ENCODE measurements at regions of chr4 and their contacts with region 1.

Region 1: DNA sequence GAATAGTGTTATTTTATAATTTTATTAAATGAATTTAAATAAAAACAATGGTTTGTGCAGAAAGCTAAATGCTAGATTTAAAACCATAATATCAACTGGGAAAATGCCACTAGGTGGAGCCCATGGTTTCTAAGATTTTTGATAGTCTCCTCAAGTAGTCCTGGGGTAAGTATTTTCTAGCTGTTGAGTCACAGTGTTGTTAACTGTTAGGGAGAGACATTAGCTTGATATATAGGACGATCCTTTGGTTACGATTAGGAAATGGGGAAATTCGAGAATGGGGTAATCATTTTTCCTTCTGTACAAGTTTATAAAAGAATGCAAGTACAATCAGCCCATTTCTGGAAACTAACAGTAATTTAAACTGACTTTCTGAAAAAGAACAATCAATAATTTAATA is 378.4 kb downstream of the ANKRD50 start:
- DNase-seq: peak; percentile 88
- H3K4me3 ChIP-seq: no peak overlapping the region
- H3K27ac ChIP-seq: peak overlapping the region; percentile 75
- H3K4me1 ChIP-seq: peaks cover 7% of the 10 kb centered on the region
- H3K27me3 ChIP-seq: no peaks in the 10 kb centered on the region
- CTCF ChIP-seq: peak; percentile 30 to 45
- POLR2A ChIP-seq: no peak

Region 2: GRCh38 chr4:124111922-124112321 is 222.2 kb before region 1 on chr4:
- CTCF ChIA-PET with region 1: no interaction called
- POLR2A ChIA-PET with region 1: no interaction called
- dilution Hi-C with region 1: no loop called
- intact Hi-C with region 1: no loop called
- DNase-seq: peak; percentile 84
- H3K4me3 ChIP-seq: no peak overlapping the region
- H3K27ac ChIP-seq: peak overlapping the region; percentile 5
- H3K4me1 ChIP-seq: peaks cover 9% of the 10 kb centered on the region
- H3K27me3 ChIP-seq: no peaks in the 10 kb centered on the region
- CTCF ChIP-seq: peak; percentile 42 to 49
- POLR2A ChIP-seq: no peak

Region 3: GRCh38 chr4:124262211-124263179 is 71.6 kb before region 1 on chr4:
- CTCF ChIA-PET with region 1: no interaction called
- POLR2A ChIA-PET with region 1: no interaction called
- dilution Hi-C with region 1: no loop called
- intact Hi-C with region 1: no loop called
- DNase-seq: peak; percentile 86
- H3K4me3 ChIP-seq: no peak overlapping the region
- H3K27ac ChIP-seq: no peak overlapping the region
- H3K4me1 ChIP-seq: no peaks in the 10 kb centered on the region
- H3K27me3 ChIP-seq: no peaks in the 10 kb centered on the region
- CTCF ChIP-seq: peak; percentile 70 to 87
- POLR2A ChIP-seq: no peak

Region 4: GRCh38 chr4:124304941-124305340 is 29.2 kb before region 1 on chr4:
- CTCF ChIA-PET with region 1: no interaction called
- POLR2A ChIA-PET with region 1: no interaction called
- dilution Hi-C with region 1: no loop called
- intact Hi-C with region 1: no loop called
- DNase-seq: peak; percentile 3
- H3K4me3 ChIP-seq: no peak overlapping the region
- H3K27ac ChIP-seq: no peak overlapping the region
- H3K4me1 ChIP-seq: no peaks in the 10 kb centered on the region
- H3K27me3 ChIP-seq: no peaks in the 10 kb centered on the region
- CTCF ChIP-seq: no peak
- POLR2A ChIP-seq: no peak

Region 5: GRCh38 chr4:124432500-124432899 is 98.4 kb after region 1 on chr4:
- CTCF ChIA-PET with region 1: interaction called, 39 read pairs
- POLR2A ChIA-PET with region 1: interaction called, 9 read pairs
- dilution Hi-C with region 1: no loop called
- intact Hi-C with region 1: loop called (anchors 1 kb)
- DNase-seq: peak; percentile 94
- H3K4me3 ChIP-seq: peak overlapping the region in 1 of 3 experiments; percentile 24
- H3K27ac ChIP-seq: peak overlapping the region; percentile 100
- H3K4me1 ChIP-seq: peaks cover 75% of the 10 kb centered on the region
- H3K27me3 ChIP-seq: no peaks in the 10 kb centered on the region
- CTCF ChIP-seq: no peak
- POLR2A ChIP-seq: no peak

Region 6: GRCh38 chr4:124631760-124632159 is 297.6 kb after region 1 on chr4:
- CTCF ChIA-PET with region 1: interaction called, 11 read pairs
- POLR2A ChIA-PET with region 1: no interaction called
- dilution Hi-C with region 1: no loop called
- intact Hi-C with region 1: no loop called
- DNase-seq: peak; percentile 98
- H3K4me3 ChIP-seq: no peak overlapping the region
- H3K27ac ChIP-seq: peak overlapping the region; percentile 70
- H3K4me1 ChIP-seq: peaks cover 29% of the 10 kb centered on the region
- H3K27me3 ChIP-seq: no peaks in the 10 kb centered on the region
- CTCF ChIP-seq: no peak
- POLR2A ChIP-seq: no peak

Region 7: DNA sequence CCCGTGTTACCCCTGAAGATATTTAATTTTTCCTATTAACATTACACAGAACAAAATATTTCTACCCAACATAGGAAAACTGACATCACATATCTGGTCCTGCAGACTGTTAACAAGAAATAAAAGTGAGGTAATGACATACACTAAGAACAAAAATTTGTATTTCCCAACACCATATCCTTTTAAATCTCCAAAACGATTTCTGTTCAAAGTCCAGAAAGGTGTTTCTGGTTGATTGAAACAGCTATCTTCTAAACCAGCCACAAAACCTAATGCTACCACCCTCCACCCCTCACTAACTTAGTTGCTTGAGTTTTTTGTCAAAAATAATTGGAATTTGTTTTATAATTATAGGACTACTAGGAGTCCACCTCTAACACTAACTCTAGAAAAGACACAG is 371.3 kb after region 1 on chr4:
- CTCF ChIA-PET with region 1: interaction called, 47 read pairs
- POLR2A ChIA-PET with region 1: interaction called, 5 read pairs
- dilution Hi-C with region 1: no loop called
- intact Hi-C with region 1: no loop called
- DNase-seq: no peak
- H3K4me3 ChIP-seq: peak overlapping the region in 1 of 3 experiments; percentile 97
- H3K27ac ChIP-seq: no peak overlapping the region
- H3K4me1 ChIP-seq: peaks cover 48% of the 10 kb centered on the region
- H3K27me3 ChIP-seq: no peaks in the 10 kb centered on the region
- CTCF ChIP-seq: no peak
- POLR2A ChIP-seq: no peak

Region 8: DNA sequence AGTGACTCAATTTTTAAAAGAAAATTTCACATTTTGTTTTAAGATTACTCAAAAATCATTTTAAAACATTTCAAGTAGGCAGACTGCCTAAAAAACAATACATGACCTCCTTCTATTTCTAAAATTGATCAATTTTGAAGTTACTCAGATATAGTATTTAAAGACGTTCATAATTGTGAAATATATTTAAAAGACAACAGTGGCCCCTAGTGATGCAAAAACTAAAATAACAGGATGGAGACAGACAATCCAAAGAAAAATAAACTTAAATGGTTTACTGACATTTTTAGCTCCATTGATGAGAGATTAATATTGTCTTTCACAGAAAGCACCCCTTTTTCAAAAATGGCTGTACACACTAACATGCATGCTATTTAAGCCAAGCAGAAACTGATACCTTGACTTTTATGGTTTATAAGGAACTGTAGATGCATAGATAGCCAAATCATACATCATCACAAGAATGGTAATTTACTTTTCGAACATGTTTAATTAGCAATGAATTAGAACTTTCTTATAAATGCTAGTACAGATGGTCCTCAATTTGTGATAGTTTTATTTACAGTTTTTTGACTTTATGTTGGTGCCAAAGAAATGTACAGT is 910.8 kb after region 1 on chr4:
- CTCF ChIA-PET with region 1: interaction called, 76 read pairs
- POLR2A ChIA-PET with region 1: interaction called, 3 read pairs
- dilution Hi-C with region 1: no loop called
- intact Hi-C with region 1: loop called (anchors 1 kb)
- DNase-seq: peak; percentile 59
- H3K4me3 ChIP-seq: no peak overlapping the region
- H3K27ac ChIP-seq: no peak overlapping the region
- H3K4me1 ChIP-seq: peaks cover 11% of the 10 kb centered on the region
- H3K27me3 ChIP-seq: no peaks in the 10 kb centered on the region
- CTCF ChIP-seq: peak in 1 of 2 donors; percentile 20
- POLR2A ChIP-seq: no peak